MCF 10A (cell line): ENCODE measurements at regions of chr17 and their contacts with region 1.

Region 1: GRCh38 chr17:14926526-14927122 is 338.5 kb downstream of the PMP22 start:
- DNase-seq: peak; percentile 83
- H3K4me3 Mint-ChIP-seq: no peak overlapping the region
- H3K27ac Mint-ChIP-seq: no peak overlapping the region
- H3K4me1 Mint-ChIP-seq: no peaks in the 10 kb centered on the region
- H3K27me3 Mint-ChIP-seq: peaks cover 14% of the 10 kb centered on the region
- CTCF ChIP-seq: peak; percentile 80

Region 2: DNA sequence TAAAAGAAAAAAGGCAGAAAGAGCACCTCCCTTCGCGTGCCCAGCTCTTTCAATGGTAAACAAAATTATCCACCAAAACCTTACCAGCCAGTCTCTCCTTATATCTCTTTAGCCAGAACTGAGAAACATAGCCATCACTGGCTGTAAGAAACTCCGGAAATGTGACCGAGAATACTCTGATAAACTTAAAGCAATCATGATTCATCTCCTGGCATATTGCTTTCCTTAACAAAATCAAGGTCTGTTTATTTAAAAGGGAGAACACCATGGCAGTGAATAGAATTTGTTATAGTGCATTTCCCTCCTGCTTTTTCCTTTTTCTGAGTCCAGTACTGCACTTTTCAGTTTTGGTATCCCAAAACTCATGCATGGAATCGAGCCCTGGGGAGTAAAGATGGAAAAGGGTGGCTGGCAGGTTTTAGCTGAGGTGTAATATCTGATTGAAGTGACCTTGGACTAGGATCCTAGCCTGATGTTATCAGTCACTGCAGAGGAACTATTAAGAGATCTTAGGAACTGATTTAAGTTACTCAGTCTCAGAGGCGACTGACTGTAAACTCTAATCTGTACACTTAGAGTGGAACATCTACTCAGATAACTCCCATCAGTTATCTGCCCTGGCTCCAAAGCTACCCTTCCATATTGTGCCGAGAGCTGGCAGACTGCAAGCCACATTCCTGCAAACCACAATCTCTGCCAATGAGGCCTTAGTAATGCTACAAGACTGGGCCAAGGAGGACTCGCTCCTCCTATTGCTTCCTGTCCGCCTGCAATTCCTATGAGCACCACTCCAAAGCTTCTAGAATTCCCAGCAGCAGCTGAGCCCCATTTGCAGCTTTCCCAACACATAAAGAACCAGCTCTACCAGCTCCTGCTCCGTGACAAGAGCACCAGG is 864.7 kb before region 1 on chr17:
- CTCF ChIA-PET with region 1: interaction called, 10 read pairs
- POLR2A ChIA-PET with region 1: no interaction called
- intact Hi-C with region 1: no loop called
- DNase-seq: peak; percentile 86
- H3K4me3 Mint-ChIP-seq: peak overlapping the region; percentile 45
- H3K27ac Mint-ChIP-seq: peak overlapping the region; percentile 47
- H3K4me1 Mint-ChIP-seq: peaks cover 16% of the 10 kb centered on the region
- H3K27me3 Mint-ChIP-seq: no peaks in the 10 kb centered on the region
- CTCF ChIP-seq: no peak

Region 3: DNA sequence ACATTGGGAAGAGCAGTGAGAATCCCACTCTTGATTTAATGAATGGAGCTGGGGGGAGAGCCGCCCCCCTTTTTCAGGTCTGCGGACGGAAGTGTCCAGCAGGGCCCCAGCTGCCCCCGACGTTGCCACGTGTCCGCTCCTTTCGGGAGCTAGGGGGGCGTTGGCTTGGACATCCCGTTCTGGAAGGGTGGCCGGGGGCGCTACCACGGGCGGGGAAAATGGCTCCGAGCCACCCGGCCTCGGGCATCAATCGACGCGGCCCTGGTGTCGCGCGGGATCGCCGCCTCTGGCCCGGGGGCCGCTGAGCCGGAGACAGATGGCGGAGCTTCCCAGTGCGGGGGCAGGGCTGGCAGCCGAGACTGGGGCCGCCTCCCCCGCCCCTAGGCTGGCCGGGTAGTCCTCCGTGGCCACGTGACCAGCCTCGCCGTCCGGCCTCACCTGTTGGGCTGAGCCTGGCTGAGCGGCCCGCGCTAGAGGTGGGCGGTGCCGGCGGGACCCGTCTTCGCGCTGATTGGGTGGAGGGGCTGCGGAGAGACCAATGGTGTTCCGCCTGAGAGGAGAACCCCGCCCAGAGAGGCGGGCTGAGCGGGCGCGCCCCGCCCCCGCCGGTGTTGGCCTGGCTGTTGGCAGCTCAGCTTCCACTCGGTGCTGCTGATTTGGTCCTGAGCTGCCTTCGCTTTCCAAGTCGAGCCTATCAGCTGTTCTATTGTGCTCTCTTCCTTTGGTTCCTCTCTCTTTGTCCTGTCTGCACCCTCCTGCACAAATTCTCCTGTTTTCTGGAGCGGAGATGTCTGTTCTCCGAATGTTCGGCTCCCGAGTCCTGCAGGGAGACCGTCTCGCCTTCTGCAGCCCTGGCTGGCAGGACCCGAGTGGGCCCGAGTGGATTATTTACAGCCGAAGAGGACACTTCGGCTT is 617.4 kb before region 1 on chr17:
- CTCF ChIA-PET with region 1: interaction called, 7 read pairs
- POLR2A ChIA-PET with region 1: no interaction called
- intact Hi-C with region 1: loop called (anchors 1 kb)
- DNase-seq: peak; percentile 91
- H3K4me3 Mint-ChIP-seq: peak overlapping the region; percentile 72
- H3K27ac Mint-ChIP-seq: peak overlapping the region; percentile 61
- H3K4me1 Mint-ChIP-seq: peaks cover 23% of the 10 kb centered on the region
- H3K27me3 Mint-ChIP-seq: no peaks in the 10 kb centered on the region
- CTCF ChIP-seq: no peak

Region 4: GRCh38 chr17:14737984-14738659 is 188.5 kb before region 1 on chr17:
- CTCF ChIA-PET with region 1: interaction called, 30 read pairs
- POLR2A ChIA-PET with region 1: interaction called, 3 read pairs
- intact Hi-C with region 1: loop called (anchors 10 kb)
- DNase-seq: peak; percentile 100
- H3K4me3 Mint-ChIP-seq: peak overlapping the region; percentile 54
- H3K27ac Mint-ChIP-seq: peak overlapping the region; percentile 85
- H3K4me1 Mint-ChIP-seq: peaks cover 30% of the 10 kb centered on the region
- H3K27me3 Mint-ChIP-seq: no peaks in the 10 kb centered on the region
- CTCF ChIP-seq: peak; percentile 36

Region 5: GRCh38 chr17:14886240-14886639 is 40.4 kb before region 1 on chr17:
- CTCF ChIA-PET with region 1: no interaction called
- POLR2A ChIA-PET with region 1: no interaction called
- intact Hi-C with region 1: no loop called
- DNase-seq: peak; percentile 18
- H3K4me3 Mint-ChIP-seq: no peak overlapping the region
- H3K27ac Mint-ChIP-seq: no peak overlapping the region
- H3K4me1 Mint-ChIP-seq: no peaks in the 10 kb centered on the region
- H3K27me3 Mint-ChIP-seq: no peaks in the 10 kb centered on the region
- CTCF ChIP-seq: no peak